Right ventricle myocardium inferior (tissue), 1 donor: ENCODE measurements at regions of chr6 and their contacts with region 1.

Region 1: GRCh38 chr6:121584586-121585369 is 149.3 kb downstream of the GJA1 start:
- DNase-seq: no peak
- ATAC-seq: no peak

Region 2: DNA sequence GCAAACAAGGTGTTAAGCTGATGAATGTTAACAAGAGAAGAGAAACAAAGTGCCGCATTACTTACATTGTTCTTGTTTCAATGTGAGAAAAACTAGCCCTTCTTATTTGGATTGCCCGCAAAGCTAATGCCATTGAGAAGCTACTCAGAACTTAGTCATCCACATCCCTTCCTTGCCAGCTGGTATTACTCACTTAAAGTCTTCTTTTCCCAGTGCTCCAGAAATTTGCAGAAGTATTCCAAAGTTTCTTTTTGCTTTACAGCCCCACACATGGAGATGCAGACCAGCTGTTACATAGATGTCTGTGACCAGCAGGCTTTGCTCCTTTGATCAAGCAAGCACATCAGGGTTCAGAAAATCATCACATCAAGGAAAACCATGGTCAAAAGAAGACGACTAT is 779.5 kb before region 1 on chr6:
- intact Hi-C with region 1: no loop called
- DNase-seq: no peak
- ATAC-seq: peak; percentile 39

Region 3: GRCh38 chr6:121443971-121444541 is 140.7 kb before region 1 on chr6:
- intact Hi-C with region 1: loop called (anchors 5 kb)
- DNase-seq: no peak
- ATAC-seq: peak; percentile 78

Region 4: GRCh38 chr6:121521892-121522664 is 62.7 kb before region 1 on chr6:
- intact Hi-C with region 1: no loop called
- DNase-seq: no peak
- ATAC-seq: no peak

Region 5: DNA sequence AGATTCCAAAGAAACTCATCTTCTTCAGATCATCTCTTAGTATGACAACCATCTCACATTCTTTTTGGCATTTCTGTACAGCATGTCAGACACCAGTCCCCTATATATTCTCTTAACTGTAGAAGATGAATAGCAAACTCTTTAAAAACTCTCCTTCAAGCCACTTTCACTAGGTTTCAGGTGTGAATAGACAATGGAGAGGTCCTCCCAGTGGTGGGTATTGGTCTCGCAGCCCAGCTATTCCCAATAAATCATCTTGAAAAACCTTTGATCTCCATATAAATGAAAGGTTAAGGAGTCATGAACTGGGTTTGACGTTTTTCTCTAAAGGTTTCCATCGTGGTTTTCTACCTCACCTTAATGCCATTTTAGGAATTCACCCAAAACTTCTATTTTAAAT is 30.7 kb after region 1 on chr6:
- intact Hi-C with region 1: no loop called
- DNase-seq: no peak
- ATAC-seq: no peak

Region 6: DNA sequence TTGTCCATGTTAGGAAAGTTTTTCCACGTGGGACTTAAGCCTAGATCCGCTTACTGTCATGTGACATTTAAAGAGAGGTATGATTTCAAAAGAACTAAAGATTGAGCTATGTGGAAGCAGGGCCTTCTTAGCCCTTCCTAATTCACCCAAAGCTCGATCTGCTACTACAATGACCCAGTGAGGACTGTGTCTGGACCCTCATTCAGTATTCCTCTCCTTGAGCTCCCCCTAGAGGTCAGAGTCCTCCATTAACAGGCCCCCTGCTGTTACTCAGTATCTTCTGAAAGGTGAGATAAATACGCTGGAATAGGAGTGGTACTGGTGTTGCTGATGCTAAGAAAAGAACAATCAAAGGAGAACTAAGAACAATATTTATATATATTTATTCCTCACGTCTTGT is 264.7 kb after region 1 on chr6:
- intact Hi-C with region 1: loop called (anchors 10 kb)
- DNase-seq: no peak
- ATAC-seq: peak; percentile 78